PC-3 (cell line): ENCODE measurements at regions of chr5 and their contacts with region 1.

Region 1: GRCh38 chr5:157603333-157604190 is 28.0 kb upstream of the ADAM19 start:
- DNase-seq: peak; percentile 99
- ATAC-seq: peak; percentile 68
- H3K4me3 ChIP-seq: peak overlapping the region; percentile 39
- H3K27ac ChIP-seq: peak overlapping the region; percentile 96
- H3K4me1 ChIP-seq: peaks cover 71% of the 10 kb centered on the region
- H3K27me3 ChIP-seq: no peaks in the 10 kb centered on the region
- CTCF ChIP-seq: no peak

Region 2: GRCh38 chr5:157366741-157367674 is 236.6 kb before region 1 on chr5:
- CTCF ChIA-PET with region 1: no interaction called
- POLR2A ChIA-PET with region 1: no interaction called
- intact Hi-C with region 1: loop called (anchors 1 kb)
- DNase-seq: peak; percentile 86
- ATAC-seq: peak; percentile 72
- H3K4me3 ChIP-seq: no peak overlapping the region
- H3K27ac ChIP-seq: 0 out of 2 replicates have a peak overlapping the region, but pooled peaks have one; percentile 1
- H3K4me1 ChIP-seq: peaks cover 33% of the 10 kb centered on the region
- H3K27me3 ChIP-seq: no peaks in the 10 kb centered on the region
- CTCF ChIP-seq: peak; percentile 98

Region 3: GRCh38 chr5:157511651-157512644 is 91.6 kb before region 1 on chr5:
- CTCF ChIA-PET with region 1: no interaction called
- POLR2A ChIA-PET with region 1: interaction called, 3 read pairs
- intact Hi-C with region 1: loop called (anchors 1 kb)
- DNase-seq: peak; percentile 99
- ATAC-seq: peak; percentile 93
- H3K4me3 ChIP-seq: peak overlapping the region; percentile 6; the same call in 1 of the 2 replicates
- H3K27ac ChIP-seq: peak overlapping the region; percentile 93
- H3K4me1 ChIP-seq: peaks cover 59% of the 10 kb centered on the region
- H3K27me3 ChIP-seq: no peaks in the 10 kb centered on the region
- CTCF ChIP-seq: no peak

Region 4: DNA sequence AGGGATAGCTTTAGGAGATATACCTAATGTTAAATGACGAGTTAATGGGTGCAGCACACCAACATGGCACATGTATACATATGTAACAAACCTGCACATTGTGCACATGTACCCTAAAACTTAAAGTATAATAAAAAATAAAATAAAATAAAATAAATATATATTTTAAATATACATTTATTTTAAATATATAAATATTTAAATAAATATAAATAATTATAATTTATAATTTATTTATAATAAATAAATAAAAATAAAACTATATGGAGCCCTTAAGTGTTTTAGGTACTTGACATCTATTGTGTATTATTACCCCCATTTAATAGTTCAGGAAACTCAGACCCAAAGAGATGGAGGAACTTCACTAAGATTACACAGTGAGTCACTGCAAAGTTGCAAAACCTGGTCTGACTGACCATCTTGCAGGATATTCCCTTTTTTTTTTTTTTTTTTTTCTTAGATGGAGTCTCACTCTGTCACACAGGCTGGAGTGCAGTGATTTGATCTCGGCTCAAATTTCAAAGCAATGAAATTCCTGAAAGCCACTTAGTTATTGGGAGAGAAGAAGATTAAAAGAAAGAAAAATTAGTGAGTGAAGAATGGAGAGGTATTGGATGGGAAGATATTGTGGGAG is 62.0 kb after region 1 on chr5:
- CTCF ChIA-PET with region 1: interaction called, 3 read pairs
- POLR2A ChIA-PET with region 1: no interaction called
- intact Hi-C with region 1: loop called (anchors 1 kb)
- DNase-seq: peak; percentile 98
- ATAC-seq: peak; percentile 64
- H3K4me3 ChIP-seq: no peak overlapping the region
- H3K27ac ChIP-seq: peak overlapping the region; percentile 70
- H3K4me1 ChIP-seq: peaks cover 20% of the 10 kb centered on the region
- H3K27me3 ChIP-seq: no peaks in the 10 kb centered on the region
- CTCF ChIP-seq: no peak

Region 5: DNA sequence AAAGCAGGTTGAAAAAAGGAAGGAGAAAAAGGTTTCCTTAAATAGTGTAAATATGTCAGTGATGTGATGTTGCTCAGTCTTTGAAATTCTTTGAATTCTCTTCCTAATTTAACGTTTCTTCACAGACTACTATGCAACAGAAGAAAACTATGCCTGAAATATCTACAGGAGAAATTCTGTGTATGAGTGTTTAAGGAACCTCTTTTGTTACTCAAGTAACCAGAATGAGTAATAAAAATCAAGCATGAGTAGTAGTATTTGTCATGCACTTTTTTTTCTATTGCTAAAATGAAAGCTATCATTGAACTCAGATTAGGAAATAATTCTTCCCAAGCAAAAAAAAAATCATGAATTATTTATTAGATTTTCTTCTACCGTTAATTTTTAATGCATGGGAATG is 107.3 kb after region 1 on chr5:
- CTCF ChIA-PET with region 1: no interaction called
- POLR2A ChIA-PET with region 1: no interaction called
- intact Hi-C with region 1: loop called (anchors 2 kb)
- DNase-seq: peak; percentile 84
- ATAC-seq: peak; percentile 87
- H3K4me3 ChIP-seq: no peak overlapping the region
- H3K27ac ChIP-seq: peak overlapping the region; percentile 65
- H3K4me1 ChIP-seq: peaks cover 22% of the 10 kb centered on the region
- H3K27me3 ChIP-seq: no peaks in the 10 kb centered on the region
- CTCF ChIP-seq: no peak